ENCODE measurements at regions of chr1 and their contacts with region 1.

Region 1: GRCh38 chr1:145845514-145846161 is at the start of gene NUDT17:
- DNase-seq: peak; percentile 77 to 83
- ATAC-seq: peak; percentile 82 to 94 (median 90)
- H3K4me3 ChIP-seq: peak within 1 kb of the TSS; percentile 14 to 69 (median 65)
- H3K27ac ChIP-seq: peak within 1 kb of the TSS in 9 of 10 donors; percentile 48 to 86 (median 81)
- H3K4me1 ChIP-seq: peaks cover 0 to 19% (median 16%) of the 10 kb centered on the region in 9 donors
- H3K27me3 ChIP-seq: no peaks in the 10 kb centered on the region
- CTCF ChIP-seq: peak; percentile 92 to 99 (median 96)
- total RNA-seq, gene NUDT17: 1.8 to 4.9 (median 3.6) TPM

Region 2: GRCh38 chr1:145885738-145886287 is 40.2 kb after region 1 on chr1 and contains the start of gene ANKRD35:
- intact Hi-C with region 1: loop called in 1 of 10 experiments (anchors 1 kb)
- DNase-seq: peak; percentile 86
- ATAC-seq: peak; percentile 90 to 96 (median 94)
- H3K4me3 ChIP-seq: peak within 1 kb of the TSS; percentile 59 to 94 (median 72)
- H3K27ac ChIP-seq: peak within 1 kb of the TSS in 7 of 10 donors; percentile 20 to 71 (median 65)
- H3K4me1 ChIP-seq: peaks cover 2 to 38% (median 13%) of the 10 kb centered on the region in 9 donors
- H3K27me3 ChIP-seq: peaks cover 0 to 12% (median 0%) of the 10 kb centered on the region in 7 donors
- CTCF ChIP-seq: no peak
- total RNA-seq, gene ANKRD35: 0.28 to 1.2 (median 0.56) TPM

Region 3: GRCh38 chr1:145918144-145918992 is 72.7 kb after region 1 on chr1 and contains the start of gene PEX11B:
- intact Hi-C with region 1: loop called in 4 of 10 experiments (anchors 5 to 10 kb)
- DNase-seq: peak; percentile 88 to 91
- ATAC-seq: peak; percentile 94 to 98 (median 96)
- H3K4me3 ChIP-seq: peak within 1 kb of the TSS; percentile 73 to 99 (median 90)
- H3K27ac ChIP-seq: peak within 1 kb of the TSS; percentile 79 to 95 (median 90)
- H3K4me1 ChIP-seq: peaks cover 3 to 34% (median 26%) of the 10 kb centered on the region in 9 donors
- H3K27me3 ChIP-seq: no peaks in the 10 kb centered on the region
- CTCF ChIP-seq: peak in 1 of 9 donors; percentile 15
- total RNA-seq, gene PEX11B: 20.4 to 26.3 (median 23.0) TPM

Region 4: DNA sequence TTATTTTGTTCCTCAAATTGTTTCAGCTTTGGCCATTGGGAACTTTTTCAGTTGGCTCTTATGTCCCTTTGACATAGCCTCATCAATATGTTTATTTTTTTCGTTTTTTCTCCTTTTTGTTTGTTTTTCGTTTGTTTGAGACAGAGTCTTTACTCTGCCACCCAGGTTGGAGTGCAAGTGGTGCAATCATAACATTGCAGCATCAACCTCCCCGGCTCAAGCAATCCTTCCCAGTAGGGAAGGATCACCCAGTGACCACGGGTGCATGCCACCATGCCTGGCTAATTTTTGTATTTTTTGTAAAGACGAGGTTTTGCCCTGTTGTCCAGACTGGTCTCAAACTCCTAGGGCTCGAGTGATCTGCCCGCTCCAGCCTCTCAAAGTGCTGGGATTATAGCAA is 126.9 kb after region 1 on chr1:
- intact Hi-C with region 1: loop called in 2 of 10 experiments (anchors 5 kb)
- DNase-seq: no peak
- ATAC-seq: no peak
- H3K4me3 ChIP-seq: no peak overlapping the region
- H3K27ac ChIP-seq: no peak overlapping the region
- H3K4me1 ChIP-seq: peaks cover 0 to 6% (median 5%) of the 10 kb centered on the region in 9 donors
- H3K27me3 ChIP-seq: no peaks in the 10 kb centered on the region
- CTCF ChIP-seq: no peak

Region 5: DNA sequence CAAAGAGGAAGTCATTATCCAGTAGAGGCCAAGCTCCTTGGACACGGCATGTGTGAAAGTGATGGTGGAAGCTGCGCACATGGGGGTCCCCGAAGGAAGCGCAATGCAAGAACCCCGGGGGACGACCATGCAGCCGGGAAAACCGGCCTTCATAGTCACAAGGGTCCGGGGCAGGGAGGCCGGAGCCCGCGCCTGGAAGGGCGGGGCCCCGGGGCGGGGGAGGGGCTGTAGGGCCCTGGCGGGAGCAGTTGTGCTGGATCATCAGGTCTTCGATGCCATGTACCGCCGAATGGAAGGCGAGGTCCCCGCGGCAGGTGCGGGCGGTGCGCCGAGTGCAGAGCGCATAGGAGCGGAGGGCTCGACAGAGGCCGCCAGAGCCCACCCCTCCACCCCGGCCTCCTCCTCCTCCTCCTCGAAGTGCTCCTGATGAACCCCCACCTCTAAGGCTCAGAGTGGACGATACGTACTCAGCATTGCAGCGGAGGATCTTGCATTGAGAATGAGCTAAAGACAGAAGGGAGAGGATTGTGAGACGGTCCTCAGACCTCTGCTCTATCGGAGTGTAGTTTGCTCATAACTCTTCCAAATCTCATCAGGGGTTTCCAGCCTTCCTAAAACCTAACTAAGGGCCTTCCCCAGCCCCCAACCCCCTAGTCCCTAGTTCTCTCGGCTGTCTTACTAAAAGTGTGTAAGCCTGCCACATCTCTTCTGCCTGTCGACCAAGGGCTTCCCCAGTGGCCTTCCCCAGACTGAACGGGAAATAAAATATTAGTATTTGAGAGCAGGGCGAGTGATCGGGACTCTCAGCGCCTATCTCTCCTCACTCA is 173.8 kb after region 1 on chr1:
- intact Hi-C with region 1: loop called in 7 of 10 experiments (anchors 5 to 10 kb)
- DNase-seq: no peak
- ATAC-seq: peak in 5 of 8 donors; percentile 1 to 47 (median 21)
- H3K4me3 ChIP-seq: peak overlapping the region in 9 of 10 donors; percentile 8 to 52 (median 31)
- H3K27ac ChIP-seq: peak overlapping the region in 4 of 10 donors; percentile 23 to 86 (median 78)
- H3K4me1 ChIP-seq: peaks cover 0 to 25% (median 12%) of the 10 kb centered on the region in 9 donors
- H3K27me3 ChIP-seq: peaks cover 0 to 44% (median 19%) of the 10 kb centered on the region in 7 donors
- CTCF ChIP-seq: no peak

Measured in heart right ventricle (tissue), 16 donors.